PC-3 (cell line): ENCODE measurements at regions of chr1 and their contacts with region 1.

Region 1: GRCh38 chr1:44792783-44793714 is 5.1 kb upstream of the BEST4 start:
- DNase-seq: no peak
- ATAC-seq: no peak
- H3K4me3 ChIP-seq: no peak overlapping the region
- H3K27ac ChIP-seq: no peak overlapping the region
- H3K4me1 ChIP-seq: no peaks in the 10 kb centered on the region
- H3K27me3 ChIP-seq: no peaks in the 10 kb centered on the region
- CTCF ChIP-seq: no peak

Region 2: DNA sequence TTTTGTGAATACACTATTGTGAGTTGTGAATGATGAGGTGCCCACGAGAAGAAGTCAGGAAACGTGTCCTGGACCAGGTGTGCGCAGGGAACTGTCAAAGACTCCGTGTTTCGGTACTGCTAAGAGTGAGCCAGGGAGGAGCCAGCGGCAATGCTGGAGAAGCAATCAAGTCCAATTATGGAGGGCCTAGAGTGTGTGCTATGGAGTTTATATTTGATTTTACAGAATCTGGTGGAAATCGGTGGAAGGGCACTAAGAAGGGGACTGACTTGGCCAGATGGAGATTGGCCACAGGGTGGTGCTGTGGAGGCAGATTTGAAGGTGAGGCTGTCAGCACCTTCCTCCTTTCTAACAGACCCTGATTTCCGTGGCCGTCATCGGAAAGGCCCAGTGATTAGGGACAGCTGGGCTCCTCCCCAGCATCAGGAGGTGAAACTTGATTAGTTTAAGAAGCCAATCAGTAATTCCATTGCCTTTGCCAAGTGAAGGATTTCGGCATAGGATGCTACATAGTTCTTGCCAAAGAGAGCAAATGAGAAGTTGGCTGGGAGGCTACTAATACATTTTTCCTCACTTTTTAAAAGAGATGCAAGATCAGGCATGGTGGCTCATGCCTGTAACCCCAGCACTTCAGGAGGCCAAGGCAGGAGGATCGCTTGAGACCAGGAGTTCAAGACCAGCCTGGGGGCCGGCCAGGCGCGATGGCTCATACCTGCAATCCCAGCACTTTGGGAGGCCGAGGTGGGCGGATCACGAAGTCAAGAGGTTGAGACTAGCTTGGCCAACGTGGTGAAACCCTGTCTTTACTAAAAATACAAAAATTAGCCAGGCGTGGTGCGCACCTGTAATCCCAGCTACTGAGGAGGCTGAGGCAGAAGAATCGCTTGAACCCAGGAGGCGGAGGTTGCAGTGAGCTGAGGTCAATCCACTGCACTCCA is 43.0 kb after region 1 on chr1:
- CTCF ChIA-PET with region 1: no interaction called
- POLR2A ChIA-PET with region 1: no interaction called
- intact Hi-C with region 1: loop called (anchors 5 kb)
- DNase-seq: peak; percentile 85
- ATAC-seq: peak; percentile 93
- H3K4me3 ChIP-seq: no peak overlapping the region
- H3K27ac ChIP-seq: no peak overlapping the region
- H3K4me1 ChIP-seq: no peaks in the 10 kb centered on the region
- H3K27me3 ChIP-seq: no peaks in the 10 kb centered on the region
- CTCF ChIP-seq: peak; percentile 91

Region 3: DNA sequence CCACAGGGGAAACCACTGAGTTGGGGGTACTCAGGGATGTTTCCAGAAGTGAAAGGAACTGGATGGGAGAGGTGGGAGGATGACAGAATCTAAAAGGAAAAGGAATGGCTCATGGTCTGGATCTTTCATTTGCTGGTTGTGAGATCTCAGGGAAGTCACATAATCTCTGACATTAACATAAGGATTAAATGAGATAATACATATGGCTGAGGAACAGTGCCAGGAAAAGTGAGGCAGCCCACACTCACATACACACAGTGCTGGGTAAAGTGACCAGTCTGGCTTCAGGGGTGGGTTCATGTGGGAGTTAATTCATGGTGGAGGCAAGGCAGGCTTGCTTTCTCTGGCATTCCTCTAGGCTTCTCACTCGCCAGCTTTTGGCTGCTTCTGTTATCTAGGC is 53.9 kb after region 1 on chr1:
- CTCF ChIA-PET with region 1: no interaction called
- POLR2A ChIA-PET with region 1: no interaction called
- intact Hi-C with region 1: no loop called
- DNase-seq: no peak
- ATAC-seq: no peak
- H3K4me3 ChIP-seq: no peak overlapping the region
- H3K27ac ChIP-seq: no peak overlapping the region
- H3K4me1 ChIP-seq: no peaks in the 10 kb centered on the region
- H3K27me3 ChIP-seq: no peaks in the 10 kb centered on the region
- CTCF ChIP-seq: no peak